ENCODE measurements at regions of chr5 and their contacts with region 1.

Region 1: DNA sequence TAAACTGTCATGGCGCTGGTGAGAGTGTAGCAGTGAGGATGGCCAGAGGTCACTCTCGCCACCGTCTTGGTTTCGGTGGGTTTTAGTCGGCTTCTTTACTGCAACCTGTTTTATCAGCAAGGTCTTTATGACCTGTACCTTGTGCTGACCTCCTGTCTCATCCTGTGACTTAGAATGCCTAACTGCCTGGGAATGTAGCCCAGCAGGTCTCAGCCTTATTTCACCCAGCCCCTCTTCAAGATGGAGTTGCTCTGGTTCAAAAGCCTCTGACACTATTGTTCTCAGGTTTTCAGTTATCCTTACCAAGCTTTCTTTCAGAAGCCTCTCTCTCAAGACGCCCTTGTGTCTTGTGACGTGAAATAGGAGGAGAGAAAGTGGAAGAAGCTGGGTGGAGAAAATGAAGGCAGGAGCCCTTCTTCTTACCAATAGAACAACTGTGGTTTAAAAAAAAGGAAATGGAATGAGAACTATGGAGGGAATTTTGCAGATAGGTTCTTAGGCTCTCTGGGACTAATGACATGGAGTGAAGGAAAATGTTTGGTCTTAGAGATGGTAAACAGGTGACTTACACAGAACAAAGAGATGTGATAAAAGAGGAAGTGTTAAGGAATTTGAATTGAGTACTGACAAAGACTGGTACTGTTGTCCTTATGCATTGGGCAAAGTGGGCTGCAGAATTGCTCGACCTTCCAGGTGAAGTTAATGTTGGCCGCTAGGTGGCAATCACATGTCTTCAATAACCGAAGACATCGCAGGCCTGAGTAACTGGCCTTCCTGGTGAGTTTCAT is 133.3 kb upstream of the RAI14 start:
- DNase-seq: peak; percentile 75 to 92
- H3K4me3 ChIP-seq: no peak overlapping the region
- H3K27ac ChIP-seq: peak overlapping the region in 2 of 5 donors; percentile 23 to 48
- H3K4me1 ChIP-seq: peaks cover 0 to 13% (median 8%) of the 10 kb centered on the region in 4 donors
- H3K27me3 ChIP-seq: no peaks in the 10 kb centered on the region
- CTCF ChIP-seq: peak in 6 of 7 experiments; percentile 46 to 75 (median 65)
- EP300 ChIP-seq: no peak
- POLR2A ChIP-seq: no peak

Region 2: DNA sequence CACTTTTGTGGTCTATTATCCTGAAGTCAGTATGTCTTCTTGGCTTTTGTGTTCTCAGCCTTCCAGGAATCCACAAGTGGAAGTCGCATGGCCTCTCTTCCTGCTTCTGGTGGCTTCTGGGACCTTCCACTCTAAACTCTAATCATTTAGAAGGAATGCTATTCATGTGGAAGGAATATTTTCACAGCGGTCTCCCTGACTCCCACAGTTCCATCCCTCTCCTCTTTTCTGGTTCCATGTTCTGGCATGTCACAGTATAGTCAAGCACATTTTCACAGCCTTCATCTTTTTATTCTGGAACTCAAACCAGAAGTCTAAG is 126.0 kb after region 1 on chr5:
- intact Hi-C with region 1: no loop called
- DNase-seq: no peak
- H3K4me3 ChIP-seq: no peak overlapping the region
- H3K27ac ChIP-seq: no peak overlapping the region
- H3K4me1 ChIP-seq: no peaks in the 10 kb centered on the region
- H3K27me3 ChIP-seq: no peaks in the 10 kb centered on the region
- CTCF ChIP-seq: no peak
- EP300 ChIP-seq: no peak
- POLR2A ChIP-seq: no peak

Region 3: DNA sequence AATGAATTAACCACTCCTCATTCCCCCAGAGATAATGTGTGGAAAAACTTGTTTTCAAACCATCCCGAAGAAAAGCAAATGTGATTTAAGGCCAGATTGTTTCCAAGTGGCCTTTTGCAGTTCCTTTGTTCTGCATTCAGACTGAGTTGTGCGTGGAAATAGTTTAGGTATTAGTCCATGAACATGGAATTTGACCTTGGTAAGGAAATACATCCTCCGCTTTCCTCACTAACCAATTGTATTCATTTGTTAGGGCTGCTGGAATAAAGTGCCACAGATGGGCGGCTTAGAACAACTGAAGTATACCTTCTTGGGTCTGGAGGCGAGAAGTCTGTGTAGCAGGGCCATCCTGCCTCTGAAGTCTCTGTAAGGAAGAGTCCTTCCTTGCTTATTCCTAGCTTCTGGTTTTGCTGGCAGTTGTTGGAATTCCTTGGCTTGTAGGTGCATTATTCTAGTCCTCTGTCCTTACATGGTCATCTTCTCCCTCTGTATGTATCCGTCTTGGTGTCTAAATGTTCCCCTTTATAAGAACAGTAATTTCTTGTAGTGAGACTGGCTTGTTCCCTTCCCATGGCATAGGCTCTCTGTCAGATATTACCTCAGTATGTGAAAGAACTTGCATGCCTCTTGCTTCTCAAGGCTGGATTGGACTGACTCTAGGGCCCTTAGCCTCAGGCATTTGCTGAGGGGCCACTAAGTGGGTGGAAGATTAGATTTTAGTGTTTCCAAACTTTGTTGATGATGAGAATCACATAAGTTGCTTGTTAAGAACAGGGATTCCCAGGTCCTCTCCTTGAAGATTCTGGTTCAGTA is 187.3 kb after region 1 on chr5:
- intact Hi-C with region 1: loop called (anchors 10 kb)
- DNase-seq: peak in 1 of 2 donors; percentile 58
- H3K4me3 ChIP-seq: no peak overlapping the region
- H3K27ac ChIP-seq: peak overlapping the region in 4 of 5 donors; percentile 1 to 74 (median 50)
- H3K4me1 ChIP-seq: peaks cover 9 to 35% (median 25%) of the 10 kb centered on the region in 4 donors
- H3K27me3 ChIP-seq: no peaks in the 10 kb centered on the region
- CTCF ChIP-seq: no peak
- EP300 ChIP-seq: no peak
- POLR2A ChIP-seq: no peak

Measured in stomach (tissue), 19 donors.